Aorta (tissue), 5 donors: ENCODE measurements at regions of chr5 and their contacts with region 1.

Region 1: DNA sequence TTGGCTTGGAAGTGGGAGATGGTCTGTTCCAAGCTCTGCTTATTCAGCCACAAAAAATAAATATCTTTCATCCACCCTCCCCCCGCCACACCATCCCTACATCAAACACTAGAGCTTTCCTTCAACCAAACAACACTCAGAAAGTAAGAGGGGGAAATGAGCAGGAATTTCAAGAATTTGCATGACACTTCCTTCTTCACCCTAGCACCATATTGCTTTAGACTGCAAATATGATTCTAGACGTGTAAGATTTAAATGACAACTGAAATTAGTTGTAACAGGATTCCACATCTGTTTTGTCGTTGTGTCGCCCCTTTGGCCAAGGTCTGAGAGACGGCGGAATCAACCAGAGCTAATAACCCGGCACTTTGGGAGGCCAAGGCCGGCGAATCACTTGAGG is 88.5 kb downstream of the NDFIP1 start:
- DNase-seq: no peak
- ATAC-seq: no peak
- H3K4me3 ChIP-seq: no peak overlapping the region
- H3K27ac ChIP-seq: no peak overlapping the region
- H3K4me1 ChIP-seq: no peaks in the 10 kb centered on the region
- H3K27me3 ChIP-seq: no peaks in the 10 kb centered on the region

Region 2: GRCh38 chr5:142215915-142216681 is 19.0 kb after region 1 on chr5:
- intact Hi-C with region 1: loop called in 1 of 2 experiments (anchors 1 kb)
- DNase-seq: peak; percentile 88 to 89
- ATAC-seq: peak; percentile 91
- H3K4me3 ChIP-seq: no peak overlapping the region
- H3K27ac ChIP-seq: peak overlapping the region; percentile 50 to 87
- H3K4me1 ChIP-seq: peaks cover 4 to 8% of the 10 kb centered on the region in 2 donors
- H3K27me3 ChIP-seq: no peaks in the 10 kb centered on the region

Region 3: GRCh38 chr5:142296914-142297417 is 99.9 kb after region 1 on chr5:
- intact Hi-C with region 1: loop called in 1 of 2 experiments (anchors 10 kb)
- DNase-seq: peak; percentile 75 to 82
- ATAC-seq: peak; percentile 68
- H3K4me3 ChIP-seq: no peak overlapping the region
- H3K27ac ChIP-seq: peak overlapping the region; percentile 91 to 94
- H3K4me1 ChIP-seq: no peaks in the 10 kb centered on the region
- H3K27me3 ChIP-seq: no peaks in the 10 kb centered on the region

Region 4: GRCh38 chr5:142324871-142325724 is 128.0 kb after region 1 on chr5 and contains the start of gene SPRY4:
- intact Hi-C with region 1: loop called in 1 of 2 experiments (anchors 5 kb)
- DNase-seq: peak; percentile 95 to 98
- ATAC-seq: peak; percentile 91
- H3K4me3 ChIP-seq: peak within 1 kb of the TSS; percentile 72 to 90
- H3K27ac ChIP-seq: peak within 1 kb of the TSS; percentile 85 to 99
- H3K4me1 ChIP-seq: peaks cover 0 to 11% of the 10 kb centered on the region in 2 donors
- H3K27me3 ChIP-seq: no peaks in the 10 kb centered on the region
- total RNA-seq, gene SPRY4: 49.8 to 67.9 TPM